Heart left ventricle (tissue), 16 donors: ENCODE measurements at regions of chr19 and their contacts with region 1.

Region 1: DNA sequence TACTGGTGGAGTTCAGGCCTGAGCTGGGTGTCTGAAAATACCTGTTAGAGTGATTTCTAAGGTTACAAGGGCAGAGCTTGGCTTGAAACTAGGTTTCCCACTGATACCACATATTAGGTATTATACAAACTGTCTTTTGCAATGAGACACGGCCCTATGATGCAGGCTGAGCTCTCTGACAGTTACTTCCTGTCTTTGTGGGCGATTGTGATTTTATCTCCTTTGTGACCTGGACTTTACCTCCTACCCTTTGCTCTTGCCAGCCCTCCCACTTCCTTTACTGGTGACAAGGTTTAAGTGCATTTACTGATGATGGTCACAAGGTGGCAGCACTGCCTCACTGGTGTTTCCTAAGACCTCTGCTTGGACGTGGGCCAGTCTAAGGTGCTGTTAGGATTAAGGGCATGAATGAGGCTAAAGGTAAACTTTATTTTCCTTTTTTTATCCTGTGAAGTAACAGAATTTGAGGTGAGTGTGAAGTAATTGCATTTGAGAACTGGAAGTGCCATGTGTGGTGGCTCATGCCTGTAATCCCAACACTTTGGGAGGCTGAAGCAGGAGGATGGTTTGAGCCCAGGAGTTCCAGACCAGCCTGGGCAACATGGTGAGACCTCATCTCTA is 7.7 kb upstream of the CXCL17 start:
- DNase-seq: peak; percentile 77 to 89 (median 79)
- ATAC-seq: peak; percentile 71 to 96 (median 85)
- H3K4me3 ChIP-seq: no peak overlapping the region
- H3K27ac ChIP-seq: peak overlapping the region in 10 of 12 donors; percentile 1 to 69 (median 36)
- H3K4me1 ChIP-seq: peaks cover 0 to 24% (median 10%) of the 10 kb centered on the region in 12 donors
- H3K27me3 ChIP-seq: no peaks in the 10 kb centered on the region
- CTCF ChIP-seq: peak; percentile 81 to 94 (median 87)
- POLR2A ChIP-seq: no peak

Region 2: GRCh38 chr19:42529248-42529764 is 78.9 kb after region 1 on chr19:
- intact Hi-C with region 1: loop called (anchors 1 to 5 kb)
- DNase-seq: peak in 4 of 5 donors; percentile 30 to 47 (median 42)
- ATAC-seq: peak; percentile 60 to 85 (median 80)
- H3K4me3 ChIP-seq: peak overlapping the region in 6 of 12 donors; percentile 23 to 49 (median 46)
- H3K27ac ChIP-seq: peak overlapping the region in 10 of 12 donors; percentile 52 to 84 (median 71)
- H3K4me1 ChIP-seq: peaks cover 0 to 18% (median 6%) of the 10 kb centered on the region in 12 donors
- H3K27me3 ChIP-seq: no peaks in the 10 kb centered on the region
- CTCF ChIP-seq: peak; percentile 72 to 85 (median 78)
- POLR2A ChIP-seq: no peak

Region 3: GRCh38 chr19:42596391-42597072 is 146.1 kb after region 1 on chr19:
- intact Hi-C with region 1: loop called in 8 of 10 experiments (anchors 2 to 10 kb)
- DNase-seq: peak in 3 of 5 donors; percentile 16 to 72 (median 30)
- ATAC-seq: peak in 2 of 4 donors; percentile 49 to 71
- H3K4me3 ChIP-seq: no peak overlapping the region
- H3K27ac ChIP-seq: no peak overlapping the region
- H3K4me1 ChIP-seq: no peaks in the 10 kb centered on the region
- H3K27me3 ChIP-seq: peaks cover 0 to 12% (median 0%) of the 10 kb centered on the region in 9 donors
- CTCF ChIP-seq: peak; percentile 76 to 95 (median 89)
- POLR2A ChIP-seq: no peak

Region 4: GRCh38 chr19:42764836-42765235 is 314.4 kb after region 1 on chr19:
- intact Hi-C with region 1: loop called in 1 of 10 experiments (anchors 10 kb)
- DNase-seq: no peak
- ATAC-seq: no peak
- H3K4me3 ChIP-seq: no peak overlapping the region
- H3K27ac ChIP-seq: no peak overlapping the region
- H3K4me1 ChIP-seq: no peaks in the 10 kb centered on the region
- H3K27me3 ChIP-seq: no peaks in the 10 kb centered on the region
- CTCF ChIP-seq: no peak
- POLR2A ChIP-seq: no peak